ENCODE measurements at regions of chr6 and their contacts with region 1.

Region 1: GRCh38 chr6:145349950-145350510 is 385.3 kb downstream of the EPM2A start:
- DNase-seq: no peak
- H3K4me3 ChIP-seq: no peak overlapping the region
- H3K27ac ChIP-seq: no peak overlapping the region
- H3K4me1 ChIP-seq: no peaks in the 10 kb centered on the region
- H3K27me3 ChIP-seq: no peaks in the 10 kb centered on the region
- CTCF ChIP-seq: no peak

Region 2: DNA sequence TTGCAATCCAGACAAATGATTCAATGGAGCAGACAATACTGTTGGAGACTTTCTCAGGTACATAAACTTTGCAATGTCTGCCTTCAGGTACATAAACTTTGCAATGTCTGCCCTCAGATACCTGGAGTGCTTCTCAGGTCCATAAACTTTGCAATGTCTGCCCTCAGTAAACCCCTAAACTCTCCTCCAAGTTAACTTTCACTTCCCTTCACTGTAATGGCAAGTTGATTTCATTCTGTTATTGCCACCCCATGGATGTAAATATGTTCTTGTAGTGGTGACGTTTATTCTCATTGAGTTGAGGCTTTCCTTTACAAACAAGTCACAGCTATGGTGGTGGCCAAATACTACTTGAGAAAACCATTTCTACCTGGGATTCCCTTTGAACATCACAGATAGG is 46.5 kb after region 1 on chr6:
- CTCF ChIA-PET with region 1: no interaction called
- dilution Hi-C with region 1: loop called (anchors 5 kb)
- in situ Hi-C with region 1: no loop called
- intact Hi-C with region 1: no loop called
- DNase-seq: no peak
- H3K4me3 ChIP-seq: no peak overlapping the region
- H3K27ac ChIP-seq: no peak overlapping the region
- H3K4me1 ChIP-seq: no peaks in the 10 kb centered on the region
- H3K27me3 ChIP-seq: peaks cover 3% of the 10 kb centered on the region
- CTCF ChIP-seq: no peak

Region 3: GRCh38 chr6:145626857-145627256 is 276.8 kb after region 1 on chr6:
- CTCF ChIA-PET with region 1: no interaction called
- dilution Hi-C with region 1: no loop called
- in situ Hi-C with region 1: no loop called
- intact Hi-C with region 1: loop called (anchors 5 kb)
- DNase-seq: no peak
- H3K4me3 ChIP-seq: no peak overlapping the region
- H3K27ac ChIP-seq: no peak overlapping the region
- H3K4me1 ChIP-seq: no peaks in the 10 kb centered on the region
- H3K27me3 ChIP-seq: no peaks in the 10 kb centered on the region
- CTCF ChIP-seq: no peak

Region 4: DNA sequence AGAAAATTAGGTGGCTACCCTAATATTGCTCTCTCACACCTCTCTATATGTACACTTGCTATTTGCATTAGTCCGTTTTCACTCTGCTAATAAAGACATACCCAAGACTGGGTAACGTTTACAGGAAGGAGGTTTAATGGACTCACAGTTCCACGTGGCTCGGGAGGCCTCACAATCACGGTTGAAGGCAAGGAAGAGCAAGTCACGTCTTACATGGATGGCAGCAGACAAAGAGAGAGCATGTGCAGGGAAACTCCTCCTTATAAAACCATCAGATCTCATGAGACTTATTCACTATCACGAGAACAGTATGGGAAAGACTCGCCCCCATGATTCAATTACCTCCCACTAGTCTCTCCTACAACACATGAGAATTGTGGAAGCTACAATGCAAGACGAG is 331.9 kb after region 1 on chr6:
- CTCF ChIA-PET with region 1: no interaction called
- dilution Hi-C with region 1: no loop called
- in situ Hi-C with region 1: no loop called
- intact Hi-C with region 1: no loop called
- DNase-seq: no peak
- H3K4me3 ChIP-seq: no peak overlapping the region
- H3K27ac ChIP-seq: no peak overlapping the region
- H3K4me1 ChIP-seq: no peaks in the 10 kb centered on the region
- H3K27me3 ChIP-seq: no peaks in the 10 kb centered on the region
- CTCF ChIP-seq: no peak

Measured in mammary epithelial cell (primary cell).